IMR-90 (cell line): ENCODE measurements at regions of chr6 and their contacts with region 1.

Region 1: GRCh38 chr6:35452186-35453090 is at the start of gene FANCE:
- DNase-seq: peak; percentile 86
- ATAC-seq: peak; percentile 96
- H3K4me3 ChIP-seq: peak within 1 kb of the TSS; percentile 87
- H3K27ac ChIP-seq: peak within 1 kb of the TSS; percentile 68
- H3K4me1 ChIP-seq: peaks cover 6% of the 10 kb centered on the region
- H3K27me3 ChIP-seq: no peaks in the 10 kb centered on the region
- CTCF ChIP-seq: no peak
- POLR2A ChIP-seq: no peak
- RAD21 ChIP-seq: no peak
- total RNA-seq, gene FANCE: 7.5 and 9.1 TPM in 2 replicates

Region 2: DNA sequence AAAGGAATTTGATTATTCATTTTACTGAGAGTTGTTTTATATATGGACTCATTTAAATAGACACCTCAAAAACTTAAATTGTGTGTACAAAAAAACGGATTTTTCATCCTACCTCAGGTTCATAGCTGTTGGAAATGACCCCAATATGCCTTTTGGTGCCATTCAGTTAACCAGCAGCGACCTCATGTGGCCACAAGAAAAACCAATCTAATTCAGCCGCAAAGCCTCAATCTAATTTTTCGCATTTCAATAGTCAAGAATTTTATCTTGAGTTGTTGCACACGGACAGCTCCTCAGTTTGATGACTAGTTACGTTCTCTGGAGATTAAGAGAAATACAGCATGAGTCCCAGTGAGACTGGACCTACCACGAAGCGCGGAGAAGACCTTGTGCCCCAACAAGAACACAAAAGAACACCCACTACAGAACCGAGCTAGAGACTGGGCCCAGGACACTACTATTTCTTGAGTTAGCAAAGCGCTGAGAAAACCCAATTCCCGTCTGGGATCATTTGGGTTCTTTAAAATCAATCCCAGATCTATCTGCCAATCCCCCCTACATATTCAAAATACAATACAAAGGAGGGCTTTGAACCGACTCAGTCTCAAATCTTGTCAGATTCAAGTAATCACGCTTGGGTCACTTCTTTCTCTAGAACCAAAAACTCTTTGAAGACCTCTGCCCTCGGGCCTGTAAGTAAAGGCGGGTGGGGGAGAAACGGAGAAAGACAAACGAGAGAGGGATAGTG is 312.4 kb before region 1 on chr6:
- CTCF ChIA-PET with region 1: no interaction called
- POLR2A ChIA-PET with region 1: no interaction called
- dilution Hi-C with region 1: no loop called
- in situ Hi-C with region 1: no loop called
- intact Hi-C with region 1: loop called (anchors 10 kb)
- DNase-seq: peak; percentile 82
- ATAC-seq: peak; percentile 72
- H3K4me3 ChIP-seq: no peak overlapping the region
- H3K27ac ChIP-seq: no peak overlapping the region
- H3K4me1 ChIP-seq: peaks cover 2% of the 10 kb centered on the region; the same call in 1 of the 2 replicates
- H3K27me3 ChIP-seq: no peaks in the 10 kb centered on the region
- CTCF ChIP-seq: peak; percentile 90
- POLR2A ChIP-seq: no peak; the same call in 1 of the 2 replicates
- RAD21 ChIP-seq: peak; percentile 98

Region 3: GRCh38 chr6:35240840-35241801 is 211.3 kb before region 1 on chr6:
- CTCF ChIA-PET with region 1: no interaction called
- POLR2A ChIA-PET with region 1: no interaction called
- dilution Hi-C with region 1: no loop called
- in situ Hi-C with region 1: no loop called
- intact Hi-C with region 1: no loop called
- DNase-seq: peak; percentile 44
- ATAC-seq: peak; percentile 87
- H3K4me3 ChIP-seq: no peak overlapping the region
- H3K27ac ChIP-seq: no peak overlapping the region
- H3K4me1 ChIP-seq: peaks cover 5% of the 10 kb centered on the region; the same call in 1 of the 2 replicates
- H3K27me3 ChIP-seq: no peaks in the 10 kb centered on the region
- CTCF ChIP-seq: peak; percentile 94
- POLR2A ChIP-seq: no peak
- RAD21 ChIP-seq: peak; percentile 96

Region 4: DNA sequence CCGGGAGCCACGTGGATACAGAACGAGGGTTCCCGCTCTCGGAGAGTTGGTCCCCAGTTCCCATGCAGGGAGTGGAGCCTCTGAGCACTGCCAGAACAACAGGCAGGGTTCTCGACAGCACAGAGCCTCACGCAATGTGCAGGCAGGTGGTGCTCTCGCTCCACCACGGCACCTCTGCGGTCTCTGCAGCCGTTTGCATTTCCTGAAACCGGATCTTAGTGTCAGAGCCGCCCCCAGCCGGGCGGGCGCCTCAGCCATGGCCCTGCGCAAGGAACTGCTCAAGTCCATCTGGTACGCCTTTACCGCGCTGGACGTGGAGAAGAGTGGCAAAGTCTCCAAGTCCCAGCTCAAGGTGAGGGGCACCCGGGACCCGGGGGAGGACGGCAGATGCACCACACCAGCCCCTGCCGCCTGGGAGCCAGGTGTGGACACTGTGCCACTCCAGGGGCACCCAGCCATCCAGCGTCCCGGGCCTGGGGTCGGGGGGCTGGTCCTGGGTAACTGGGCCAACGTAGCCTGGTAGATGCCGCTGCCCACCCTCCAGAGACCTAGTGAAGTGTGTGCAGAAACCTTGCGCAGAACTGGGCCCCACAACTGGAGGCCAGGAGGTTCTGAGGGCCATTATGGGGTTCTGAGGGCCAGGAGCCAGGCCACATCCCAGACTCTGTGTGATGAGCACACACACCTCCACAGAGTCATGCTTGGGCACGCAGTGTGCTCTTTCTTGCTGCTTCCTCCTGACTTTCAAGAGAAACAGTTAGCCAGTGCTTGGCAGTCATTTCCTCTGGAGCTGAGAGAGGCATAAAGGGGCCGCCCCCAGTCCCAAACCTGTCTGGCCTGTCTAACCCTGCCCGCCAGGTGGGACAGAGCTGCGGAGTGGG is 154.6 kb before region 1 on chr6 and contains the start of gene DEF6:
- CTCF ChIA-PET with region 1: interaction called, 4 read pairs
- POLR2A ChIA-PET with region 1: no interaction called
- dilution Hi-C with region 1: no loop called
- in situ Hi-C with region 1: no loop called
- intact Hi-C with region 1: loop called (anchors 5 kb)
- DNase-seq: peak; percentile 82
- ATAC-seq: peak; percentile 94
- H3K4me3 ChIP-seq: peak within 1 kb of the TSS; percentile 15; the same call in 1 of the 2 replicates
- H3K27ac ChIP-seq: no peak within 1 kb of the TSS
- H3K4me1 ChIP-seq: peaks cover 4% of the 10 kb centered on the region; the same call in 1 of the 2 replicates
- H3K27me3 ChIP-seq: no peaks in the 10 kb centered on the region
- CTCF ChIP-seq: peak; percentile 75
- POLR2A ChIP-seq: no peak
- RAD21 ChIP-seq: peak; percentile 87
- total RNA-seq, gene DEF6: 1.9 and 2.5 TPM in 2 replicates

Region 5: DNA sequence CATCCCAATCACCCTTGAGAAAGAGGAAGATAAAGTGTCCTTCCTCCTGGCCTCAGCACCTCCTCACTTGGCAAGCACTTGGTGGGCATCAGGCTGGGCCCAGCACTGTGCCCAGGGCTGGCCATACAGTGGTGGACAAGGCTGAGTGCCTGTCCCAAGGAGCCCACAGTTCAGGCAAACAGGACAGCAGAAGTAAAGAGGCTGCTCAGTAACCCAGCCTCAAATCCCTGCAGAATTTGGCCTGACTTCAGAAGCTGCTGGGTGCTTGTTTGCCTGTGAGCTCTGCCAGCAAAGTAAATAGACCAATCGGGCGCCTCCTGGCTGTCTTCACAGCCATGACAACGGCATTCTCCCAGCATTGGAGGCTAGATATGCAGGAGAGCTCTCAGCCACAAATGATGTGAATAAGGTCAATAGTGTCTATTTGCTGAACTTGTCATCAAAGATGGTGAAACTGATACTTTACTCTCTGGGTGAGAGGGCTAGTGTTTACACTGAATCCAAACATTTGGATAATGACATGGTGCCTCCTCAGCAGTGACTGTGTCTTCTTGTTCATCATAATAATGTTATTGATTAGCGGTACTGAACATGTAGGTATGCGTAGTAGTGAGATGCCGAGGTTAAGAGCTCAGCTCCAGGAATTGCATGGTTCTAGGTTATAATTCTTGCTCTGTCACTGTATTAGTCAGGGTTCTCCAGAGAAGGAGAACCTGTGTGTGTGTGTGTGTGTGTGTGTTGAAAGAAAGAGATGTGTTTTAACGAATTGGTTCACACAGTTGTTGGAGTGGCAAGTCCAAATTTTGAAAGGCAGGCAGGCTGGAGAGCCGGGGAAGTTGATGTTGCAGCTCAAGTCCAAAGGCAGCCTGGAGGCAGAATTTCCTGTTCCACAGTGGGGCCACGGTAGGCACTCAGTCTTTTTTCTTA is 37.1 kb before region 1 on chr6:
- CTCF ChIA-PET with region 1: interaction called, 20 read pairs
- POLR2A ChIA-PET with region 1: no interaction called
- dilution Hi-C with region 1: no loop called
- in situ Hi-C with region 1: no loop called
- intact Hi-C with region 1: loop called (anchors 1 kb)
- DNase-seq: peak; percentile 96
- ATAC-seq: peak; percentile 90
- H3K4me3 ChIP-seq: no peak overlapping the region
- H3K27ac ChIP-seq: peak overlapping the region; percentile 77
- H3K4me1 ChIP-seq: peaks cover 33% of the 10 kb centered on the region
- H3K27me3 ChIP-seq: no peaks in the 10 kb centered on the region
- CTCF ChIP-seq: peak; percentile 78
- POLR2A ChIP-seq: no peak
- RAD21 ChIP-seq: peak; percentile 73

Region 6: GRCh38 chr6:36839749-36840431 is 1387.5 kb after region 1 on chr6:
- CTCF ChIA-PET with region 1: no interaction called
- POLR2A ChIA-PET with region 1: no interaction called
- dilution Hi-C with region 1: no loop called
- in situ Hi-C with region 1: no loop called
- intact Hi-C with region 1: no loop called
- DNase-seq: no peak
- ATAC-seq: peak; percentile 78
- H3K4me3 ChIP-seq: peak overlapping the region; percentile 42
- H3K27ac ChIP-seq: no peak overlapping the region
- H3K4me1 ChIP-seq: peaks cover 8% of the 10 kb centered on the region; the same call in 1 of the 2 replicates
- H3K27me3 ChIP-seq: peaks cover 55% of the 10 kb centered on the region
- CTCF ChIP-seq: peak; percentile 34; the same call in 1 of the 2 replicates
- POLR2A ChIP-seq: no peak
- RAD21 ChIP-seq: no peak